Activated CD4-positive, alpha-beta T cell treated with anti-CD3 and anti-CD28 coated beads for 36 hours (primary cell): ENCODE measurements at regions of chr13 and their contacts with region 1.

Region 1: DNA sequence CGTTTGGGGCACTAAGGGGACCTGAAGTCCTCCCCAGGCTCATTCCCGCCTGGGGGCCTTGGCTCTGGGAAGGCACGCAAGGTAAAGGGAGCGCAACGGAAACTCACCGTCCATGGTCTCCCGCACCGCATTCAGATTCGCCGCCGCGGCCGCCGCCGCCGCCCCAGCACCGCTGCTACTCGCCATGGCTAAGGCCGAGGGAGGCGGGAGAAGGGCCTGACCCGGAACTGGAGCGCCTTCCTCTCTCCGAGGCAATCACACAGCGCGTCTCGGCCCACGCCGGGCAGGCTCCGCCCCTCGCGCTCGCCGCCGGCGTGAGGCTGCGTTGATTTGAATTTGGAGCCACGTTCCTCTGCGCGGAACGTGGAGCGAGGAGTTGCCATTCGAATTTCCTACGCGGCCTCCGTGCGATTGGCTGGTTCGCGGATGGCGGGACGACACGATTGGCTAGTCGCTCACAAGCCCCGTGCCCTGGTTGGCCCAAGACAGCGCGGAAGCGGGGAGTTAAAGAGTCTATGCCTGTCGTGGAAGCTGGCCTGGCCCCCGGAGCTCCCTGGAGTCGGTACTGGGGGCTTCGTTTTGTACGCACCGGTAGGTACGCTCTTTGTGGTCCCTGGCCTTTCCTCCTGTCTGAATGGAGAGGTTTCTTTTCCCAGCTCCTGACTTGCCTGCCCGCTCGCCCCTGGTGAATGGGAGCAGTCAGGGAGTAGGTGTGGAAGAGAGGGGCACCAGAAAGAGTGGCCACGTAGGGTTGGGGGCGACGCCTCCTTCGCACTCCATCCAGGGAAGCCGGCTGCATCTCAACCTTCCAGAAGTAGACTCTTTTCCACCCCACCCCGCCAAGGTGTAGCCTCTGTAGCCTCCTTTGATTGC is at the starts of genes BORA and MZT1:
- DNase-seq: peak; percentile 97
- ATAC-seq: peak; percentile 96
- H3K4me3 Mint-ChIP-seq: peak within 1 kb of the TSS; percentile 91
- H3K27ac Mint-ChIP-seq: peak within 1 kb of the TSS; percentile 89
- H3K4me1 Mint-ChIP-seq: peaks cover 39% of the 10 kb centered on the region
- H3K27me3 Mint-ChIP-seq: no peaks in the 10 kb centered on the region
- total RNA-seq, gene BORA: 20.8 to 21.2 TPM
- total RNA-seq, gene MZT1: 10.6 to 26.9 TPM

Region 2: DNA sequence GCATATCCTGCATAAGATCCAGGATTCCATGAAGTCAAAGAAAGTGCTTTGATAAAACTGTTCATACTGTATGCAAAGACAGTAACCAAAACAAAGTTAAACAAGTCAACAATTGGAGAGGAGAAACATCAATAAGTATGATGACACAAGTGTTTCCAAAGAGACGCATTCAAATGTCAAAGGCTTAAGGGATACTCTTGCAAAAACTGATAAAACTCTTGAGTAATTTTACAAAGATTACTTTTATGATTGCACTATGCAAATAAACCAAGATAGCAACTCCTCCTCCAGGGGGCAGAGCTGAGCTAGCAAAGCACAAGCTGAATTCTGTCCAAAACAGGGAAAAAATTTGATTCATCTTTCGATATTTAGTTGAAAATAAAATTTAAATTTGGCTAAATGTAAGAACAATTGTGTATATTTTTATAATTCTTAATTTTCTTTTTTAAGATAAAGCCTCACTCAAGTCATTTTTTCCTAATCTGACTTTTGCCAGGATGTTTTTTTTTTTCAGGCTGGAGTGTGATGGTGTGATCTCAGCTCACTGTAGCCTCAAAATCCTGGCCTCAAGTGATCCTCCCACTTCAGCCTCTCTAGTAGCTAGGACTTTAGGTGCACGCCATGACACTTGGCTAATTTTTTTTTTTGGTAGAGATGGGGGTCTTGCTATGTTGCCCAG is 84.2 kb before region 1 on chr13:
- CTCF ChIA-PET with region 1: no interaction called
- POLR2A ChIA-PET with region 1: no interaction called
- intact Hi-C with region 1: loop called in 1 of 2 experiments (anchors 2 kb)
- DNase-seq: peak; percentile 80
- ATAC-seq: peak; percentile 47
- H3K4me3 Mint-ChIP-seq: no peak overlapping the region
- H3K27ac Mint-ChIP-seq: no peak overlapping the region
- H3K4me1 Mint-ChIP-seq: no peaks in the 10 kb centered on the region
- H3K27me3 Mint-ChIP-seq: peaks cover 3% of the 10 kb centered on the region

Region 3: GRCh38 chr13:72781451-72782439 is 54.1 kb after region 1 on chr13 and contains the starts of genes DIS3 and PIBF1:
- CTCF ChIA-PET with region 1: interaction called, 4 read pairs
- POLR2A ChIA-PET with region 1: no interaction called
- intact Hi-C with region 1: loop called (anchors 1 kb)
- DNase-seq: peak; percentile 98
- ATAC-seq: peak; percentile 98
- H3K4me3 Mint-ChIP-seq: peak within 1 kb of the TSS; percentile 94
- H3K27ac Mint-ChIP-seq: peak within 1 kb of the TSS; percentile 97
- H3K4me1 Mint-ChIP-seq: peaks cover 55% of the 10 kb centered on the region
- H3K27me3 Mint-ChIP-seq: no peaks in the 10 kb centered on the region
- total RNA-seq, gene DIS3: 55.0 to 63.5 TPM
- total RNA-seq, gene PIBF1: 25.7 to 25.9 TPM